A549 (cell line): ENCODE measurements at regions of chr12 and their contacts with region 1.

Region 1: DNA sequence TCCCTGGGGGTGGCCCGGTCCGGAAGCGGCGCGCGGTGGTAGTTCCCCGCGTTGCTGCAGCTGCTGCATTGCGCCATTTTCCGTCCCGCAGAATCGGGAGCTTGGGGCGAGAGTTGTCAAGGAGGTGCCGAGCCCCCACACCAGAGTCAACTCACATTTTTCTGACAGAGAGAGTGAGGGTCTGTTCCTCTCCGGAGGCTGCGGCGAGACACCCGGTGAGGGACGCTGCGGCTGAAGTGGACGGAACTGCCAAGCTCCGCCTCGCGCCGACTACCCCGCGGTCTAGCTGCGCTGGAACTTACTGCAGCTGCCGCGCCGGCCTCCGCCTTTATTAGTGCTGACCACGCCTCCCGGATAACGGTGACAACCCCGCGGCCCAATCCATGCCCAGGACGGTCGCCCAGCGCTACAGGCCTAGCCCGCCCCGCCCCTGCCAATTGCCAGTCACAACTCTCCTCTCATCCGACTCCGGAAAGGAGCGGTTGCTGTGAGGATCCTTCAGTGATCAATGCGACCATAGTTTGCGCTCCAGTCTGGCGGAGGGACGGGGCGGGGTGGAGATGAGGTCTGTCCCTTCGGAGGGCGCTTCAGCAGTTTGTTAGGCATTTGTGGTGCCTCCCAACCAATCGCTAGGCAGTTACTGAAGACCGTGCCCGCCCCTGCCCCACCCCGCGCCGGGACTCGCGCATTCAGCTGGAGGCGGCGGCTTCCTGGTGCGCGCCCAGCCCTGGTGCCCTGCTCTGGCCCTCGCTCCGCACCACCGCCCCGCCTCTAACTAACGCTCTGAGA is at the start of gene VAMP1:
- DNase-seq: peak; percentile 98
- ATAC-seq: peak; percentile 95 to 96
- H3K4me3 ChIP-seq: peak within 1 kb of the TSS; percentile 68
- H3K27ac ChIP-seq: peak within 1 kb of the TSS; percentile 81 to 90
- H3K4me1 ChIP-seq: peaks cover 38% of the 10 kb centered on the region
- CTCF ChIP-seq: no peak
- EP300 ChIP-seq: no peak
- POLR2A ChIP-seq: peak; percentile 100
- RAD21 ChIP-seq: no peak
- polyA plus RNA-seq, gene VAMP1: 17.6 and 28.8 TPM in 2 replicates

Region 2: GRCh38 chr12:6318440-6318879 is 152.1 kb before region 1 on chr12:
- CTCF ChIA-PET with region 1: interaction called, 56 read pairs
- POLR2A ChIA-PET with region 1: interaction called, 7 read pairs
- DNase-seq: no peak
- ATAC-seq: peak in 1 of 2 experiments; percentile 1; a peak in 1 of 6 replicates
- H3K4me3 ChIP-seq: no peak overlapping the region
- H3K27ac ChIP-seq: peak overlapping the region in 1 of 2 experiments; percentile 52; a peak in 2 of 6 replicates
- H3K4me1 ChIP-seq: peaks cover 70% of the 10 kb centered on the region
- CTCF ChIP-seq: no peak
- EP300 ChIP-seq: no peak
- POLR2A ChIP-seq: no peak
- RAD21 ChIP-seq: no peak

Region 3: GRCh38 chr12:6341417-6342139 is 129.0 kb before region 1 on chr12 and contains the start of gene TNFRSF1A:
- CTCF ChIA-PET with region 1: interaction called, 18 read pairs
- POLR2A ChIA-PET with region 1: interaction called, 10 read pairs
- DNase-seq: peak; percentile 84 to 91
- ATAC-seq: peak; percentile 60 to 62
- H3K4me3 ChIP-seq: peak within 1 kb of the TSS; percentile 91
- H3K27ac ChIP-seq: peak within 1 kb of the TSS; percentile 95 to 98
- H3K4me1 ChIP-seq: peaks cover 72% of the 10 kb centered on the region
- CTCF ChIP-seq: no peak
- EP300 ChIP-seq: peak in 1 of 2 experiments; percentile 42; a peak in 1 of 5 replicates
- POLR2A ChIP-seq: peak; percentile 58
- RAD21 ChIP-seq: peak in 1 of 2 experiments; percentile 27; a peak in 1 of 5 replicates
- polyA plus RNA-seq, gene TNFRSF1A: 460 and 621 TPM in 2 replicates

Region 4: GRCh38 chr12:6392504-6393077 is 78.0 kb before region 1 on chr12:
- CTCF ChIA-PET with region 1: interaction called, 14 read pairs
- POLR2A ChIA-PET with region 1: no interaction called
- DNase-seq: peak in 1 of 2 experiments; percentile 89
- ATAC-seq: peak; percentile 48 to 80; a peak in 4 of 6 replicates
- H3K4me3 ChIP-seq: no peak overlapping the region
- H3K27ac ChIP-seq: peak overlapping the region; percentile 69 to 74
- H3K4me1 ChIP-seq: peaks cover 53% of the 10 kb centered on the region
- CTCF ChIP-seq: no peak
- EP300 ChIP-seq: no peak
- POLR2A ChIP-seq: no peak
- RAD21 ChIP-seq: 0 out of 5 replicates have a peak, but pooled peaks of 1 of the 2 experiments have one; percentile 2

Region 5: DNA sequence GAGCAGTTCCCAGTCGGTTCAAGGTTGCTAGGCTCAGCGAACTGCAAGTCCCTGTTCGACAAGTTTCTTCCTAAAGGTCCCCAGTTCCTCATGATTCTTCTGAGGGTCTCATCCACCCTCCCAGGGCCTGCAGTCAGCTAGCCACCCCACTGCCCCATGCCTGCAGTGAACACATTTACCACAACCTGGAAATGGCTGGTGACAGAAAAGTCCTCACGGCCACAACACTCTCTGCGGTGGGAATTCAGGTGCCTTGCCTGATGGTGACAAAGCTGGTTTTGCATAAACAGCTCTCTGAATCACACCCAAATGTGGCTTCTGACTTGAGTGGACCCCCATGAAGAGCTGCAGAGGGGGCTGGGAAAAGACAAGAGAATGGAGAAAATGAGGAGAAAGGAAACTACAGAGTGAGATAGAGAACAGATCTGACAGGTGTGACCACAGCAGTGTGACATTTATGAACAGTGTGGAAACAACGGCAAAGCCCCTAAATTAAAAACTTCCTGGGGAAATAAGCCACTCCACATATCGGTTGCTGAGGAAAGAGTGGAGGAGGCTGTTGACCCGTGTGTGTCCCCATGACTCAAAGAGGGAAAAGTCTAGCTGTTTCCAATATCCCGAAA is 27.1 kb before region 1 on chr12:
- CTCF ChIA-PET with region 1: interaction called, 56 read pairs
- POLR2A ChIA-PET with region 1: interaction called, 3 read pairs
- DNase-seq: no peak
- ATAC-seq: no peak
- H3K4me3 ChIP-seq: no peak overlapping the region
- H3K27ac ChIP-seq: peak overlapping the region in 1 of 2 experiments; percentile 24; a peak in 1 of 6 replicates
- H3K4me1 ChIP-seq: no peaks in the 10 kb centered on the region
- CTCF ChIP-seq: no peak
- EP300 ChIP-seq: no peak
- POLR2A ChIP-seq: no peak
- RAD21 ChIP-seq: no peak

Region 6: DNA sequence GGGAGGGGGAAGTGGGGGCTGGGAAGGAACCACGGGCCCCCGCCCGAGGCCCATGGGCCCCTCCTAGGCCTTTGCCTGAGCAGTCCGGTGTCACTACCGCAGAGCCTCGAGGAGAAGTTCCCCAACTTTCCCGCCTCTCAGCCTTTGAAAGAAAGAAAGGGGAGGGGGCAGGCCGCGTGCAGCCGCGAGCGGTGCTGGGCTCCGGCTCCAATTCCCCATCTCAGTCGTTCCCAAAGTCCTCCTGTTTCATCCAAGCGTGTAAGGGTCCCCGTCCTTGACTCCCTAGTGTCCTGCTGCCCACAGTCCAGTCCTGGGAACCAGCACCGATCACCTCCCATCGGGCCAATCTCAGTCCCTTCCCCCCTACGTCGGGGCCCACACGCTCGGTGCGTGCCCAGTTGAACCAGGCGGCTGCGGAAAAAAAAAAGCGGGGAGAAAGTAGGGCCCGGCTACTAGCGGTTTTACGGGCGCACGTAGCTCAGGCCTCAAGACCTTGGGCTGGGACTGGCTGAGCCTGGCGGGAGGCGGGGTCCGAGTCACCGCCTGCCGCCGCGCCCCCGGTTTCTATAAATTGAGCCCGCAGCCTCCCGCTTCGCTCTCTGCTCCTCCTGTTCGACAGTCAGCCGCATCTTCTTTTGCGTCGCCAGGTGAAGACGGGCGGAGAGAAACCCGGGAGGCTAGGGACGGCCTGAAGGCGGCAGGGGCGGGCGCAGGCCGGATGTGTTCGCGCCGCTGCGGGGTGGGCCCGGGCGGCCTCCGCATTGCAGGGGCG is 63.5 kb after region 1 on chr12 and contains the start of gene GAPDH:
- CTCF ChIA-PET with region 1: interaction called, 47 read pairs
- POLR2A ChIA-PET with region 1: interaction called, 42 read pairs
- DNase-seq: peak; percentile 90 to 99
- ATAC-seq: peak; percentile 54 to 73
- H3K4me3 ChIP-seq: peak within 1 kb of the TSS; percentile 97
- H3K27ac ChIP-seq: peak within 1 kb of the TSS; percentile 97 to 100
- H3K4me1 ChIP-seq: peaks cover 51% of the 10 kb centered on the region
- CTCF ChIP-seq: no peak
- EP300 ChIP-seq: no peak
- POLR2A ChIP-seq: peak; percentile 99
- RAD21 ChIP-seq: no peak; a peak in 1 of 5 replicates
- polyA plus RNA-seq, gene GAPDH: 10,036 and 10,800 TPM in 2 replicates

Region 7: GRCh38 chr12:6607751-6608591 is 137.4 kb after region 1 on chr12:
- CTCF ChIA-PET with region 1: no interaction called
- POLR2A ChIA-PET with region 1: no interaction called
- DNase-seq: peak; percentile 76 to 89
- ATAC-seq: peak; percentile 57 to 64
- H3K4me3 ChIP-seq: no peak overlapping the region
- H3K27ac ChIP-seq: peak overlapping the region; percentile 44 to 99; a peak in 4 of 6 replicates
- H3K4me1 ChIP-seq: peaks cover 41% of the 10 kb centered on the region
- CTCF ChIP-seq: no peak
- EP300 ChIP-seq: no peak
- POLR2A ChIP-seq: no peak
- RAD21 ChIP-seq: no peak